Aorta (tissue), 5 donors: ENCODE measurements at regions of chr21 and their contacts with region 1.

Region 1: GRCh38 chr21:37452227-37452626 is 85.7 kb downstream of the DYRK1A start:
- DNase-seq: peak in 1 of 2 donors; percentile 63
- ATAC-seq: peak; percentile 83
- H3K4me3 ChIP-seq: no peak overlapping the region
- H3K27ac ChIP-seq: no peak overlapping the region
- H3K4me1 ChIP-seq: peaks cover 3 to 20% of the 10 kb centered on the region in 2 donors
- H3K27me3 ChIP-seq: no peaks in the 10 kb centered on the region

Region 2: DNA sequence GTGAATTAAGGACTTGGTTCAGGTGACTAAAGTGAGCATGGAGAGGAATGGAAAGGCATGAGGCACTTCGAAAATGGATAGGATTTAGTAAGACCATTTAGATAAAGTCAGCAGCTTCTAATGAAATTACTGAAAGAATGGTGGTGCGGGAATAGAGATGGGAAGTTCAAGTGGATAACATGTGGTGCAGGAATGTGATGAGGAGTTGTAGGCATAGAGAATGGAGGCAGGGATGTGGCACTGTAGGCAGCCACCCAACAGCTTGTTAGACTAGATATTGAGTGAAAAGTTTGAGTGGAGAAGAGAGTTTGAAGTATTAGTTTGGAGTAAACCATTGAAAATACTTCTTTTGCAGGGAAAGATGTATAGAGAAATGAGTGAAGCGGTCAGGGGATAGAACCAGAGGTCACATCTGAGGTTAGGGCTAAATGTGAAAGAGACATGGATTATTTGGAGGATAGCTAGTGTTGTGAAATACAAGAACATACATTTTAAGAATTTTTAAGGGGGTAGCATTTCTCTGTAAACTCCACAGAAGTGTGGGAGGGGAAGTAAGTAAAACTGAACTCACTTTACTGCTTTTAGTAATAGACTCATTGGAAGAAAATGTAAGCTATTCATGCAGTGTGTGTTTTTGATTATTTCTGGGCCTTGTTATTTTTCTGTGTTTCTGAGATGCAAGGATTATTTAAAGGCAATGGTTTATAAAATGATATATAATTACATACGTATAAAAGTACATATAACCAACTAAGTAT is 39.4 kb before region 1 on chr21:
- intact Hi-C with region 1: loop called in 1 of 2 experiments (anchors 5 kb)
- DNase-seq: no peak
- ATAC-seq: no peak
- H3K4me3 ChIP-seq: no peak overlapping the region
- H3K27ac ChIP-seq: peak overlapping the region in 1 of 2 donors; percentile 79
- H3K4me1 ChIP-seq: peaks cover 1 to 15% of the 10 kb centered on the region in 2 donors
- H3K27me3 ChIP-seq: no peaks in the 10 kb centered on the region